ENCODE measurements at regions of chr1 and their contacts with region 1.

Region 1: GRCh38 chr1:76074321-76075187 is at the start of gene ST6GALNAC3:
- DNase-seq: peak; percentile 59 to 91 (median 74)
- ATAC-seq: peak; percentile 96
- H3K4me3 ChIP-seq: peak within 1 kb of the TSS; percentile 80
- H3K4me3 Mint-ChIP-seq: peak within 1 kb of the TSS; percentile 93
- H3K27ac ChIP-seq: no peak within 1 kb of the TSS
- H3K27ac Mint-ChIP-seq: peak within 1 kb of the TSS; percentile 79
- H3K4me1 ChIP-seq: peaks cover 15% of the 10 kb centered on the region
- H3K4me1 Mint-ChIP-seq: peaks cover 23% of the 10 kb centered on the region
- H3K27me3 ChIP-seq: no peaks in the 10 kb centered on the region
- H3K27me3 Mint-ChIP-seq: no peaks in the 10 kb centered on the region
- CTCF ChIP-seq: no peak
- total RNA-seq, gene ST6GALNAC3: 0.77 to 1.3 TPM

Region 2: DNA sequence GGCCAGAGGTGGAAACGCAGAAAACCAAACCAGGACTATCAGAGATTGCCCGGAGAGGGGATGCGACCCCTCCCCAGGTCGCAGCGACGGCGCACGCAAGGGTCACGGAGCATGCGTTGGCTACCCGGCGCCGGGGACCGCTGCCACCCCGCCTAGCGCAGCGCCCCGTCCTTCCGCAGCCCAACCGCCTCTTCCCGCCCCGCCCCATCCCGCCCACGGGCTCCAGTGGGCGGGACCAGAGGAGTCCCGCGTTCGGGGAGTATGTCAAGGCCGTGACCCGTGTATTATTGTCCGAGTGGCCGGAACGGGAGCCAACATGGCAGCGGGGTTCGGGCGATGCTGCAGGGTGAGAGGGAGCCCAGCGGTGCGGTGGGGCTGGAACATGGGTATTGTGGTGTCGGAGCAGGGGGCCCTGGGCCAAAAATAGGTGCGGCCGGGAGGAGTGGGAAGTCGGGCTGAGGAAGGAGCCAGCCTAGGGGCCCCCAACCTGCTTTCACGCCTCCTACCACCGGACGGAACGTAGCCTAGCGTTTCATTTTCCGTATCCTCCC is 350.0 kb before region 1 on chr1 and contains the start of gene ACADM:
- CTCF ChIA-PET with region 1: no interaction called
- POLR2A ChIA-PET with region 1: no interaction called
- intact Hi-C with region 1: loop called in 1 of 2 experiments (anchors 10 kb)
- DNase-seq: peak; percentile 62 to 90 (median 80)
- ATAC-seq: peak; percentile 94
- H3K4me3 ChIP-seq: peak within 1 kb of the TSS; percentile 99
- H3K4me3 Mint-ChIP-seq: peak within 1 kb of the TSS; percentile 99
- H3K27ac ChIP-seq: peak within 1 kb of the TSS; percentile 65 to 73
- H3K27ac Mint-ChIP-seq: peak within 1 kb of the TSS; percentile 94
- H3K4me1 ChIP-seq: peaks cover 14% of the 10 kb centered on the region
- H3K4me1 Mint-ChIP-seq: peaks cover 61% of the 10 kb centered on the region
- H3K27me3 ChIP-seq: no peaks in the 10 kb centered on the region
- H3K27me3 Mint-ChIP-seq: no peaks in the 10 kb centered on the region
- CTCF ChIP-seq: no peak
- total RNA-seq, gene ACADM: 3.5 to 4.7 TPM

Region 3: GRCh38 chr1:76281306-76281705 is 206.8 kb after region 1 on chr1:
- CTCF ChIA-PET with region 1: no interaction called
- POLR2A ChIA-PET with region 1: no interaction called
- intact Hi-C with region 1: loop called in 1 of 2 experiments (anchors 10 kb)
- DNase-seq: no peak
- ATAC-seq: no peak
- H3K4me3 ChIP-seq: no peak overlapping the region
- H3K4me3 Mint-ChIP-seq: no peak overlapping the region
- H3K27ac ChIP-seq: no peak overlapping the region
- H3K27ac Mint-ChIP-seq: no peak overlapping the region
- H3K4me1 ChIP-seq: peaks cover 16% of the 10 kb centered on the region
- H3K4me1 Mint-ChIP-seq: peaks cover 29% of the 10 kb centered on the region
- H3K27me3 ChIP-seq: no peaks in the 10 kb centered on the region
- H3K27me3 Mint-ChIP-seq: no peaks in the 10 kb centered on the region
- CTCF ChIP-seq: no peak

Region 4: GRCh38 chr1:77533660-77534305 is 1459.2 kb after region 1 on chr1:
- CTCF ChIA-PET with region 1: no interaction called
- POLR2A ChIA-PET with region 1: no interaction called
- intact Hi-C with region 1: loop called in 1 of 2 experiments (anchors 10 kb)
- DNase-seq: peak; percentile 37 to 80 (median 55)
- ATAC-seq: peak; percentile 66
- H3K4me3 ChIP-seq: no peak overlapping the region
- H3K4me3 Mint-ChIP-seq: peak overlapping the region; percentile 17
- H3K27ac ChIP-seq: no peak overlapping the region
- H3K27ac Mint-ChIP-seq: peak overlapping the region; percentile 13
- H3K4me1 ChIP-seq: peaks cover 13% of the 10 kb centered on the region
- H3K4me1 Mint-ChIP-seq: peaks cover 7% of the 10 kb centered on the region
- H3K27me3 ChIP-seq: no peaks in the 10 kb centered on the region
- H3K27me3 Mint-ChIP-seq: no peaks in the 10 kb centered on the region
- CTCF ChIP-seq: peak; percentile 91